Calu3 (cell line): ENCODE measurements at regions of chr9 and their contacts with region 1.

Region 1: GRCh38 chr9:76810377-76810957 is 46.2 kb downstream of the PCA3 start:
- DNase-seq: peak; percentile 45
- H3K4me3 Mint-ChIP-seq: no peak overlapping the region
- H3K27ac Mint-ChIP-seq: no peak overlapping the region
- H3K4me1 Mint-ChIP-seq: no peaks in the 10 kb centered on the region
- H3K27me3 Mint-ChIP-seq: peaks cover 38% of the 10 kb centered on the region
- CTCF ChIP-seq: peak; percentile 34

Region 2: DNA sequence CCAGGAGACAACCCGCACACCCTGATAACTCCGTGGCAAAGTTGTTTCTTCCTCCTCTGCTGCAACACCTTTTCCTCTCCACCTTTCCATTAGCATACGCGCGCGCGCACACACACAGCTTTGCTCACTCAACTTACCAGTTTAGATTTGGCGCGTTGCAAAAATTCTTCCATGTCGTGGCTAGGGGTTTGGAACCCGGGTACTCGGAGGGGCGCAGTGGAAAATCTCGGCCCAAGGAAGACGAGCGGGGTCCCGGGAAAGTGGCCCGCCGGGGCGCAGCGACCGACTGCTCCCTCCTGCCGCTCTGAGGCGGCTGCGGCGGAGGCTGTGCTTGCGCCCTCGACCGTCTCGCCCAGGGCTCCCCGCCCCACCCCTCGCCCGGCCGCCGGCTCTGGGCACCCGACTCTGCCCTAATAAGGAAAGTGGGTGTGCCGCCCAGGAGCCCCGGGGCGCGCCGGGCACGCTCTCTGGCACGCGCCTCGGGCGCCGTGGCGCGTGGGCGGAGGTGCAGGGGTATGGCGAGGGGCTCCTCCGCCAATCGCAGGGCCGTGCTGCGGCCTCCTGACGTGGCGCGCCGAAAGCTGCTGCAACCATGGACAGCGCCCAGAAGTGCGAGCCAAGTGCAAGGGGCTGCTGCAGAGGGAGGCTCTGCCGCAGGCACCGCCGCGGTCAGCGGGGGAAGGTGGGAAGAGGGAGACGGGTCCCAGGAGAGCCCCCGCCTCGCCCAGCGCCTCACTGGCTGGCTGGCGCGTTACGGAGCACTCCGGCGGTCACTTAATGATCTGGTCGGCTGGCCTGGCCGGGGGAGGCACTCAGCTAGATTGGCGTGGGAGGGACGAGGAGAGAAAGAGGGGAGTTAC is 95.6 kb after region 1 on chr9 and contains the start of gene PRUNE2:
- CTCF ChIA-PET with region 1: no interaction called
- intact Hi-C with region 1: loop called (anchors 10 kb)
- DNase-seq: peak; percentile 54
- H3K4me3 Mint-ChIP-seq: peak within 1 kb of the TSS; percentile 55
- H3K27ac Mint-ChIP-seq: no peak within 1 kb of the TSS
- H3K4me1 Mint-ChIP-seq: no peaks in the 10 kb centered on the region
- H3K27me3 Mint-ChIP-seq: peaks cover 88% of the 10 kb centered on the region
- CTCF ChIP-seq: no peak
- total RNA-seq, gene PRUNE2: 0.07 TPM in 1 of 2 replicates, not detected in the other

Region 3: GRCh38 chr9:76969716-76970115 is 159.2 kb after region 1 on chr9:
- CTCF ChIA-PET with region 1: no interaction called
- intact Hi-C with region 1: no loop called
- DNase-seq: no peak
- H3K4me3 Mint-ChIP-seq: no peak overlapping the region
- H3K27ac Mint-ChIP-seq: no peak overlapping the region
- H3K4me1 Mint-ChIP-seq: no peaks in the 10 kb centered on the region
- H3K27me3 Mint-ChIP-seq: peaks cover 3% of the 10 kb centered on the region
- CTCF ChIP-seq: no peak

Region 4: GRCh38 chr9:76987594-76988200 is 177.2 kb after region 1 on chr9:
- CTCF ChIA-PET with region 1: interaction called, 18 read pairs
- intact Hi-C with region 1: loop called (anchors 1 kb)
- DNase-seq: peak; percentile 46
- H3K4me3 Mint-ChIP-seq: no peak overlapping the region
- H3K27ac Mint-ChIP-seq: no peak overlapping the region
- H3K4me1 Mint-ChIP-seq: no peaks in the 10 kb centered on the region
- H3K27me3 Mint-ChIP-seq: peaks cover 34% of the 10 kb centered on the region
- CTCF ChIP-seq: no peak

Region 5: GRCh38 chr9:77149879-77150278 is 339.4 kb after region 1 on chr9:
- CTCF ChIA-PET with region 1: interaction called, 3 read pairs
- intact Hi-C with region 1: loop called (anchors 2 kb)
- DNase-seq: no peak
- H3K4me3 Mint-ChIP-seq: no peak overlapping the region
- H3K27ac Mint-ChIP-seq: no peak overlapping the region
- H3K4me1 Mint-ChIP-seq: no peaks in the 10 kb centered on the region
- H3K27me3 Mint-ChIP-seq: peaks cover 48% of the 10 kb centered on the region
- CTCF ChIP-seq: no peak